PC-9 (cell line): ENCODE measurements at regions of chr22 and their contacts with region 1.

Region 1: DNA sequence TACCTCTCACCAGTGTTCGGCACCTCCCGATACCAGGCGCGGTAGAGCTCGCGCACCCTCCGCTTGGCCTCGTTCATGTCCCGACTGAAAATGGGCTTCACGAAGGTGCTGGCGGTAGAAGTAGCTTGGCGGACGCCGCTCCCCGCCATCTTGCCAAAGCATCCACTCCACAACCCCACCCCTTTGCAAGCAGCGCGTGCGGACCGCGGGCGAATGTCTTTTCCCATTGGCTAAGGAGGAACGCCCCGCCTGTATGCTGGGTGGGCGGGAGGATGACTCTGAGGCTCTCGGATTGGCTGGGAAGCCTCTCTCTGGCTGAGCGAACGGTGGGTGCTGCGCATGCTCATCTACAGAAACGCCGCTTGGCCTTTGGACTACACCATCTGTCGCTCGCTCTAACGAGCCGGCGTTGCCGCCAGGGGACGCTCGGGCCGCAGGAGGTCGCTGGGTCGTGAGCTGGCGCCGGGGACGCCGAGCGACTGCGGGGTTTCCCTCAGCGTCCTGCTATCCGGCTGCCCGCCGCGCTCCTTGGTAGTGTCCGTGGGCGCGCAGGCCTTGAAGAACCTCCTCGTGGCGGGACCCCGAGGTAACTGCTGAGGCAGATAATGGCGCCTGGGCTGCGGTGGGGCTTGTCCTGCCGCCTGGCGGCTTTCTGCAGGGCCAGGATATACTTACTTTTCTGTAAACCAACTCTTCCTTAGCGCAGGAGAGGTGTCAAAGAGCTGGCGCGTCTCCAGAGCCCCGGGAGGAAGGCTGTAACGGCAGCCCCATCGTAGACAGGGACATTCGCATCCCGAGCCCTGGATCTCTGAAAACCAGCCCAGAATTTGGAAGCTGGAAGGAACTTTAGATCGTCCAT is at the start of gene NDUFA6:
- DNase-seq: peak; percentile 98
- H3K4me3 ChIP-seq: peak within 1 kb of the TSS; percentile 98
- H3K27ac ChIP-seq: peak within 1 kb of the TSS; percentile 59
- H3K4me1 ChIP-seq: peaks cover 16% of the 10 kb centered on the region; the same call in 1 of the 2 replicates
- H3K27me3 ChIP-seq: no peaks in the 10 kb centered on the region
- CTCF ChIP-seq: peak; percentile 92
- total RNA-seq, gene NDUFA6: 71.5 and 84.9 TPM in 2 replicates

Region 2: DNA sequence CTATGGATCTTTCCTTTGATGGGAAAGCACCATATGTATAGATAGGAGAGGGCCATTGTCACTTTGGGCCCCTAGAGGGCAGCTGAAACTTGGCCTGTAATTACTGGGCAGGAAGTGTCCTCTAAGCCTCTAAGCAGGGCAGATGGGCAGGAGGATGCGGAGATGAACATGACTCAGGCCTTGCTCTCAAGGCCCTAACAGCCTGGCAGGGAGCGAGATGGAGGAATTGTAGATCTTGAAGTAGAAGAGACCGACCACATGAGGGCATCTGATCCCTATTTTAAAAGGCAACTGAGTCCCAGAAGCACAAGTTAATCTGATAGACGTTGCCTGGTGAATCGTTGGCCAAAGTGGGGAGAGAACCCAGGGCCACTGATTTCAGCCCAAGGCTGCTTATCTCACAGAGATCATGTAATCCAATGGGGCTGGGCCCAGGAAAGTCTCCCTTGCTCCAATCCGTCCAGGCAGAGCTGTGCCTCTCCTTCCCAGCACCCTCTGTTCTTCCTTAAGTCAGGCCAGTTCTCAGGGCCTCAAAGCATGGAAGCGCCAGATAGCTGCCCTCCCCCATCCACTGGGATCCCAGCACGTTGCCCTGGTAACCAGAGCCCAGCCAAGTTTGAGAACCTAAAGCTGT is 124.1 kb before region 1 on chr22:
- CTCF ChIA-PET with region 1: interaction called, 3 read pairs
- POLR2A ChIA-PET with region 1: no interaction called
- intact Hi-C with region 1: loop called (anchors 1 kb)
- DNase-seq: peak; percentile 59 to 80
- H3K4me3 ChIP-seq: no peak overlapping the region
- H3K27ac ChIP-seq: no peak overlapping the region
- H3K4me1 ChIP-seq: no peaks in the 10 kb centered on the region
- H3K27me3 ChIP-seq: peaks cover 8% of the 10 kb centered on the region; the same call in 1 of the 2 replicates
- CTCF ChIP-seq: peak; percentile 73

Region 3: DNA sequence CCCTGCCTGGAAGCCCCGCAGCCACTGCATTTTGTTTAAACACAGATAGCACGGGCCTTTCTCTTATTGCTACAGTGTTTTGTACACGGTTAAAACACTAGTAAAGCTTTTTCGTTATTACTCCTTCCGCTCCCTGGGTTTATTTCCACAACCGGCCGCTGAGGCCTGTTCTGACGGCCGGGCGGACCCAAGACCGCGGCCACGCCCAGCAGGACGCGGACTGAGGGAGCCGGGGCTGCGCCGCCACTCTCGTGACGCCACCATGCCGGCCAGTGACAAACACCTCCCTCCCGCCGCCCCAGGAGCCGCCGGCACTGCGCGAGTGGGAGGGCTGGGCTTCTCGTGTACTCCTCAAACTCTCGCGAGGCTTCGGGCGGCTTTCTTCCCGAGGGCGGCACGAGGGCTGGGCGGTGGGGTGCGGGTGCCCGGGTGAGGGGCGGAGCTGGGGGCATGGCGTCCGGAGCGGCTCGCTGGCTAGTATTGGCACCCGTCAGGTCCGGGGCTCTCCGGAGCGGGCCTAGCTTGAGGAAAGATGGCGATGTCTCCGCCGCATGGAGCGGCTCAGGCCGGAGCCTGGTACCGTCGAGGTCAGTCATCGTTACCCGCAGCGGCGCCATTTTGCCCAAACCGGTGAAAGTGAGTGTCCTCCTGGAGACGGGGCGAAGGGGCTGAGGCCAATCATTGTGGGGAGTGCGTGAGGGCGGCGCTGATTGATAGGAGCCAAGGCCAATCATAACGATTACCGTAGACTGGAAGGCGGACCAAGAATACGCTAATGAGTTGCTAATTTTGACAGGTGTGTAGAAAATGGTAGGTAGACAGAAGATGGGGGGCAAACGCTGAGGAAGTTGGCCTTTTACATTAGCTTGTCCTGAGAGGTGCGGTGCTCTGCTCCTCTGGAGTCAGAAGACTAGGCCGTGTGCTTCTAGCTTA is 11.2 kb before region 1 on chr22 and contains the start of gene SMDT1:
- CTCF ChIA-PET with region 1: no interaction called
- POLR2A ChIA-PET with region 1: interaction called, 4 read pairs
- intact Hi-C with region 1: loop called (anchors 1 kb)
- DNase-seq: peak; percentile 95 to 98
- H3K4me3 ChIP-seq: peak within 1 kb of the TSS; percentile 85
- H3K27ac ChIP-seq: peak within 1 kb of the TSS; percentile 81
- H3K4me1 ChIP-seq: peaks cover 14% of the 10 kb centered on the region
- H3K27me3 ChIP-seq: no peaks in the 10 kb centered on the region
- CTCF ChIP-seq: no peak
- total RNA-seq, gene SMDT1: 55.3 and 72.8 TPM in 2 replicates

Region 4: DNA sequence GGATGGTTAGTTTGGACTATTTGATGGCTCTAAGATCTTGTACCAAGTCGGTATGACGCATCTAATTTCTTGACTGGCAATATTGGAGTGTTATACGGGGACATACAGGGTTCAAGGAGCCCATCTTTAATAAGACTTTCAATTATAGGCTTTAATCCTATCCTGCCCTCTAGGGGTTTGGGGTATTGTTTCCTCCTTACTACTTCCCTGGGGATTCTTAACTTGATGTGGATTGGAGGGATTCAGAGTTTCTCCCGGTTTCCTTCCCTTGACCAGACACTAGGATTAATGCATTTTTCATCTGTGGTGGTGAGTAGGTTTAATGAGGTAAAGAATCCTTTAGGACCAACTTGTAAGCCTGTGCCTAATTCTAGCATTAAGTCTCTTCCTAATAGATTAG is 21.0 kb after region 1 on chr22:
- CTCF ChIA-PET with region 1: interaction called, 12 read pairs
- POLR2A ChIA-PET with region 1: no interaction called
- intact Hi-C with region 1: no loop called
- DNase-seq: no peak
- H3K4me3 ChIP-seq: no peak overlapping the region
- H3K27ac ChIP-seq: no peak overlapping the region
- H3K4me1 ChIP-seq: no peaks in the 10 kb centered on the region
- H3K27me3 ChIP-seq: peaks cover 4% of the 10 kb centered on the region; the same call in 1 of the 2 replicates
- CTCF ChIP-seq: no peak

Region 5: DNA sequence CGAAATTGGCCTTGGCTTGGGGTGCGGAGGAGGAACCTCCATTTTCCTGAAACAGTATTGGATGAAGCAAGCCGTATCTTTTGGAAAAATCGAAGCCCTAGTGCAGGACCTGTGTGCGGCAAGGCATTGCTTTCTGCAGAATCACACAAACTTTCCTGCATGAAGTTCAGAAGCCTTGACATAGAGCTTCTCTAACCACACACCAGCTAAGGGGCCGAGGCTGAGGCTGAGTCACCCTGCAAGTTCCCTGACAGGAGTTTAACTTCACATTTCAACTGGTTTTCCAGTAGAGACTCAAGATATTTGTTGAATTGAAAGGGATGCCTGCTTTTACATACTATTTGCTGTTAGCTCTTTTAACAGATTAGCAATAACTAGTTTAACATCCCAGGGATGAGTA is 111.8 kb after region 1 on chr22:
- CTCF ChIA-PET with region 1: no interaction called
- POLR2A ChIA-PET with region 1: no interaction called
- intact Hi-C with region 1: no loop called
- DNase-seq: no peak
- H3K4me3 ChIP-seq: no peak overlapping the region
- H3K27ac ChIP-seq: no peak overlapping the region
- H3K4me1 ChIP-seq: no peaks in the 10 kb centered on the region
- H3K27me3 ChIP-seq: no peaks in the 10 kb centered on the region
- CTCF ChIP-seq: no peak

Region 6: DNA sequence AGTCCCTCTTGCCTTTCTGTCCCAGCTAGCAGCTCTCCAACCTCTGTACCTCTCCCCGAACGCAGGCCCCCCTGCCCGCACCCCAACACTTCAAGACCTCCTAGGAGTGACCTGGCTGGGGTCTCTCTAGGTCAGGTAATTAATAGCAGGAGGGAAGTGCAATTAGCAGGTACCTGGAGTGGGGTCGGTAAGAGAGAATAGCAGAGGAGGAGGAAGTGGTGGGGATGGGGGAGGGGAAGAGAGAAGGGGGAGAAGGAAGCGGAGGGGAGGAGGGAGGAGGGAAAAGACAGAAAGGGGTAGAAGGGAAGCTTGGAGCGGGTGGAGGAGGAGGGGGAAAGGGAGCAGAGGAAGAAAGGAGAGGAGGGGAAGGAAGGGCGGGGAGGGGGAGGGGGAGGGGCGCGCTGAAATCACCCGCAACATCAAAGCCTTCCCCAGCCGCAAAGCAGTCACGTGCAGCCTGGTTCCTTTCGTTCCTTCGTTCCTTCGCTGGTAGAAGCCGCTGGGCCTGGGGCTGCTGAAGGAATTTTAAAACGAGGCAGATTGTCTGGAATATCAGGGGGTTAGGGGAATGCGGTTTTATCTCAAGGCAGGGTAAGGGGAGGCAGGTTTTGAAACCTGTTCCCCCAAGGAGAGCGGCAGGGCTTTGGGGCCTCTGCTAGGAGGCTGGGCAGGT is 208.9 kb after region 1 on chr22:
- CTCF ChIA-PET with region 1: interaction called, 13 read pairs
- POLR2A ChIA-PET with region 1: no interaction called
- intact Hi-C with region 1: no loop called
- DNase-seq: no peak
- H3K4me3 ChIP-seq: no peak overlapping the region
- H3K27ac ChIP-seq: no peak overlapping the region
- H3K4me1 ChIP-seq: peaks cover 16% of the 10 kb centered on the region
- H3K27me3 ChIP-seq: no peaks in the 10 kb centered on the region
- CTCF ChIP-seq: no peak

Region 7: DNA sequence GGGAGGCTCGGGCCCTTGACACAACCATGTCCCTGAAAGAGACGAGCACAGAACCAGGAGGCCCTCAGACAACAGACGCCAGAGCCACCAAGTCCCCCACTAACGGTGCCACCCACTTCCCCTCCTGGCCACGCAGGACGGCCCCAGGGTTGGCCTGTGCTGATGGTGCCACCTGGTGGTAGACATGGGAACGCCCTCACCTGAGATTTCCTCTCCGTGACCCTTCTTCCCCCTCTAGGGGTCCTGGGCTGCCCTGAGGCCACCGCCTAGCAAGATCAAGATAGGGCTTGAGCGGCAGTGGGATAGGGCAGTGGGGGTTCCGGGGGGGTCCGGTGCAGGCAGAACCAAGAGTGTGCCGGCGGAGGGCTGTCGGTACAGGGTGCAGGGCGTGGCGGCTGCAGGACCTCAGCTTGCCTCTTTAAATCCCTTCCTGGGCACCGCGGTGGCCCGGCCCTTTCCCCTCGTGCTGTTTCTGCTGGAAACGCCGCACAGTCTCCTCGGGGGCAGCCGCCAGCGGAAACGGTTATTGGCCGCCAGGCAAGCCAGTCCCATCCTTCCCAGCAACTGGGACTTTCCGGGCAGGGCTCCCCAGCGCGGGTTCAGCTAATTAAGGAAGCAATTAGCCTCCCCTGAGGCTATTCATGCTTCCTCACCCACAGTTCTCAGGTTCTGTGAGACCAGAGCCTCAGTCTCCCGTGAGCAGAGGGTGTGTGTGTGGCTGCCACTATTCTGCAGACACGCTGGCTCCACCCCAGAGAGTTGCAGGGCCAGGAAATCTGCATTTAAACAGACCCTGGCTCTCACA is 346.9 kb after region 1 on chr22:
- CTCF ChIA-PET with region 1: interaction called, 11 read pairs
- POLR2A ChIA-PET with region 1: interaction called, 3 read pairs
- intact Hi-C with region 1: loop called (anchors 1 kb)
- DNase-seq: peak in 1 of 2 experiments; percentile 73
- H3K4me3 ChIP-seq: peak overlapping the region; percentile 55
- H3K27ac ChIP-seq: no peak overlapping the region
- H3K4me1 ChIP-seq: peaks cover 24% of the 10 kb centered on the region
- H3K27me3 ChIP-seq: peaks cover 17% of the 10 kb centered on the region
- CTCF ChIP-seq: peak; percentile 100